Activated naive CD4-positive, alpha-beta T cell treated with anti-CD3 and anti-CD28 coated beads for 36 hours (primary cell): ENCODE measurements at regions of chr11 and their contacts with region 1.

Region 1: DNA sequence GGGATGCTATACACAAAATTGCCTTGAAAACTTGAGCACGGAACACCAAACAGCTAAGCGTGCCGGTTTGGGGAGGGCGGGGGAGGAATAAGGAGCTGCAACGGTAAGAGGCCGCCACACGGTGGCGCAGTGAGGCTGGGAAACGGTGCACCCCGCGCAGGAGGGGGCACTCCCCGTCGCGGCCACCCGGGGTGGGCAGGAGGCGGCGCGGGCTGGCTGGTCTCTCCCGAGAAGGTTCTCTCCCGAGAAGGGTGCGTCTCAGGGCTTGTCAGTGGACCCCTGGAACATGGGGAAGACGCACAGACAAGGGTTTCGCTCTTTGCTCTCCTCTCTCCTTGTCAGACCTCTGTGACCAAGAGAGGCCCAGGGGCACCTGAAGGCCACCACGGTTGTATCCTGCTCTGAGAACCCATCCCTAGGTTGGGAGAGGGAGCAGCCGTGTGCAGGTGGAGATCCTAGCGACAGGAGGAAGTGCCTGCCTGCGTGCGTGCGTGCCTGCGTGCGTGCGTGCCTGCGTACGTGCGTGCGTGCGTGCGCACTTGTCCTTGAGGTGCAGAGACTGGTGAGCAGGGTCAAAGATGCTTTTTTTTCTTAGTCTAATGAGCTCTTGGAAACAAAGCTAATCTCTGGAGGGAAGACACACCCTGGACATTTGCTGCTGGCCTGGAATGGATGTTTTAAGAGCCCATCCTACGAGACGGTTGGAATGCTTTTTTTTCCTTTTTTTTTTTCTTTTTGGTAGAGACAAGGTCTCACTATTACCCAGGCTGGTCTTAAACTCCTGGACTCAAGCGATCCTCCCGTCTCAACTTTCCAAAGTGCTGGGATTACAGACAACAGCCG is 18.1 kb upstream of the JAM3 start:
- DNase-seq: peak; percentile 74
- H3K4me3 Mint-ChIP-seq: peak overlapping the region; percentile 59
- H3K27ac Mint-ChIP-seq: peak overlapping the region; percentile 76
- H3K4me1 Mint-ChIP-seq: no peaks in the 10 kb centered on the region
- H3K27me3 Mint-ChIP-seq: peaks cover 9% of the 10 kb centered on the region

Region 2: DNA sequence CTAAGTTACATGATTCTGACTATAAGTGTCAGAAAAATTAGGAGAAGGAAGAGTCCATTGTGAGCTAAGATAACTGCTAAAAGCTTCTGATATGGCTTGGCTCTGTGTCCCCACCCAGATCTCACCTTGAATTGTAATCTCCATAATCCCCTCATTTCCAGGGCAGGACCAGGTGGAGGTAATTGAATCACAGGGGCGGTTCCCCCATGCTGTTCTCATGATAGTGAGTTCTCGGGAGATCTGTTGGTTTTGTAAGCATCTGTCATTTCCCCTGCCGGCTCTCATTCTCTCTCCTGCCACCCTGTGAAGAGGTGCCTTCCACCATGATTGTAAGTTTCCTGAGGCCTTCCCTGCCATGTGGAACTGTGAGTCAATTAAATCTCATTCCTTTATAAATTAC is 748.7 kb before region 1 on chr11:
- CTCF ChIA-PET with region 1: no interaction called
- intact Hi-C with region 1: no loop called
- DNase-seq: no peak
- H3K4me3 Mint-ChIP-seq: no peak overlapping the region
- H3K27ac Mint-ChIP-seq: no peak overlapping the region
- H3K4me1 Mint-ChIP-seq: no peaks in the 10 kb centered on the region
- H3K27me3 Mint-ChIP-seq: peaks cover 3% of the 10 kb centered on the region

Region 3: GRCh38 chr11:133966921-133967598 is 83.7 kb before region 1 on chr11:
- CTCF ChIA-PET with region 1: interaction called, 4 read pairs
- intact Hi-C with region 1: loop called (anchors 1 kb)
- DNase-seq: peak; percentile 84
- H3K4me3 Mint-ChIP-seq: peak overlapping the region; percentile 81
- H3K27ac Mint-ChIP-seq: peak overlapping the region; percentile 73
- H3K4me1 Mint-ChIP-seq: peaks cover 9% of the 10 kb centered on the region
- H3K27me3 Mint-ChIP-seq: peaks cover 2% of the 10 kb centered on the region

Region 4: GRCh38 chr11:134062265-134063123 is 11.7 kb after region 1 on chr11:
- CTCF ChIA-PET with region 1: interaction called, 27 read pairs
- intact Hi-C with region 1: no loop called
- DNase-seq: no peak
- H3K4me3 Mint-ChIP-seq: no peak overlapping the region
- H3K27ac Mint-ChIP-seq: no peak overlapping the region
- H3K4me1 Mint-ChIP-seq: peaks cover 10% of the 10 kb centered on the region
- H3K27me3 Mint-ChIP-seq: peaks cover 23% of the 10 kb centered on the region

Region 5: GRCh38 chr11:134098566-134099184 is 47.9 kb after region 1 on chr11:
- CTCF ChIA-PET with region 1: interaction called, 26 read pairs
- intact Hi-C with region 1: loop called (anchors 1 kb)
- DNase-seq: no peak
- H3K4me3 Mint-ChIP-seq: no peak overlapping the region
- H3K27ac Mint-ChIP-seq: no peak overlapping the region
- H3K4me1 Mint-ChIP-seq: no peaks in the 10 kb centered on the region
- H3K27me3 Mint-ChIP-seq: no peaks in the 10 kb centered on the region

Region 6: DNA sequence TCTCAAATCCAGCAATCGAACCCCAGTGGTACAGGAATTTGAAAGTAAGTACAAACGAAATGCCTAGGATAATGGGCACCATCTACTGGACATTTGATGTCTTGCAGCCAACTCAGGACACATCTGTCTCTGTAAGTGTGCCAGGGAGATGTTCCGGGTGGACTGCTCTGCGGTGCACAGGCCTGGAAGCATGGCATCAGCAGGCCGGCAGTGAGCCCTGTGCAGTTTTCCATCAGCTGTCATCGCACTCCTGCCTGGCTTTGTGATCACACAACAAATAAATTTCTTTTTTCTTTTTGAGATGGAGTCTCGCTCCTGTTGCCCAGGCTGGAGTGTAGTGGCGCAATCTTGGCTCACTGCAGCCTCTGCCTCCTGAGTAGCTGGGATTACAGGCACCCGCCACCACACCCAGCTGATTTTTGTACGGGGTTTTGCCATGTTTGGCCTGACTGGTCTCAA is 89.1 kb after region 1 on chr11:
- CTCF ChIA-PET with region 1: interaction called, 33 read pairs
- intact Hi-C with region 1: loop called (anchors 1 kb)
- DNase-seq: peak; percentile 72
- H3K4me3 Mint-ChIP-seq: no peak overlapping the region
- H3K27ac Mint-ChIP-seq: no peak overlapping the region
- H3K4me1 Mint-ChIP-seq: peaks cover 6% of the 10 kb centered on the region
- H3K27me3 Mint-ChIP-seq: no peaks in the 10 kb centered on the region